PC-9 (cell line): ENCODE measurements at regions of chr5 and their contacts with region 1.

Region 1: GRCh38 chr5:58317009-58317408 is 142.9 kb downstream of the PLK2 start:
- DNase-seq: no peak
- H3K4me3 ChIP-seq: no peak overlapping the region
- H3K27ac ChIP-seq: no peak overlapping the region
- H3K4me1 ChIP-seq: no peaks in the 10 kb centered on the region
- H3K27me3 ChIP-seq: no peaks in the 10 kb centered on the region
- CTCF ChIP-seq: no peak

Region 2: DNA sequence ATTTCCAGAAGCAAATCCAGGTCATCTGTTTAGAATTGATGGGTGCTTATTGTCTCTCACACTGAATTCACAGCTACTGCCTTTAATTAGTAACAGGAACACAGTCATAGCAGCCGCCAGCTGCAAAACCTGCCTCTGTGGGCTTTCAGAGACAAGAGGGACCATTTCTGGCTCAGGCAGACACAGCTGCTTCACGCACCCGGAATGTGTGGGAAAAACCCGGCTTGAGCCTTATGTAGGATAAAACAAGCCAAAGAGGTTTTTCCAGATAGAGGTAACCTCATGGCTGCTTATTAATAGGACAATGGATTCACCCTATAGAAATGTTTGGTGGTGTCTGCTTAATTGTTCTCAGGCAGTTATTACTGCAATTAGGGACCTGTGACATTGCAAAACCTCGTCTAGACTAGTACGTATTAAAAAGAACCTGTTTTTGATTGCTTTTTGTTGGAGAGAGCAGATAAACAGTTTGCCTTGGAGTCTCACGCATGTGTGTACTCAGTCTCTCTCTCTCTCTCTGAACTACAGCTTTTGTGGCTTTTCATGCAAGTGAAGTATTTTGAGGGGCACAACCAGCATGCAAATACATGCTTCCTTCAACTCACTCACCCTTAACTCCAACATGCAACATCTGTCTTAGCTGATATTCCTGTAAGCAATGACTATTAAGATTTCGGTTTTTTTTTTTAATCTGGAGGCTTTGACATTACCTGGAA is 159.9 kb before region 1 on chr5:
- CTCF ChIA-PET with region 1: interaction called, 6 read pairs
- POLR2A ChIA-PET with region 1: no interaction called
- intact Hi-C with region 1: loop called (anchors 1 kb)
- DNase-seq: no peak
- H3K4me3 ChIP-seq: no peak overlapping the region
- H3K27ac ChIP-seq: no peak overlapping the region
- H3K4me1 ChIP-seq: no peaks in the 10 kb centered on the region
- H3K27me3 ChIP-seq: no peaks in the 10 kb centered on the region
- CTCF ChIP-seq: no peak